SK-N-SH (cell line): ENCODE measurements at regions of chr10 and their contacts with region 1.

Region 1: DNA sequence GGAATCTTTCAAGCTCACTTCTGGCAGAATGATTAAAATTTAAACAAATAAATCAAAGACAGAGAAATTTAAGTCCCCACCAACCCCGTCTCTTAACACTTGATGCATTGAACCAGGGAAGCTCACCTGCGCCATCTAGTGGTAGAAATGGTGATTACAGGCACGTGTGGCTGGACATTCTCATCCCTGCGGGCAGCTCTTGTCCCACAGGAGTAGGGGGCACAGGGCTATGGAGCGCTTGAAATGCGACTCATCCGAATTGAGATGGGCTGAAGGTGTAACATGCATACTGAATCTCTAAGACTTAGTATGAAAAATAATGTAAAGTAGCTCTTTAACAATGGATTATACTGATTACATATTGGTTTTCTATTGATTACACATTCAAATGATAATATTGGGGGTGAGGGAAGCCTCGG is 24.8 kb upstream of the SLIT1 start:
- DNase-seq: peak; percentile 86
- H3K4me3 ChIP-seq: no peak overlapping the region; a peak in 1 of 4 replicates
- H3K27ac ChIP-seq: no peak overlapping the region
- H3K4me1 ChIP-seq: no peaks in the 10 kb centered on the region
- H3K27me3 ChIP-seq: no peaks in the 10 kb centered on the region
- CTCF ChIP-seq: peak; percentile 97
- EP300 ChIP-seq: no peak
- RAD21 ChIP-seq: peak; percentile 94

Region 2: DNA sequence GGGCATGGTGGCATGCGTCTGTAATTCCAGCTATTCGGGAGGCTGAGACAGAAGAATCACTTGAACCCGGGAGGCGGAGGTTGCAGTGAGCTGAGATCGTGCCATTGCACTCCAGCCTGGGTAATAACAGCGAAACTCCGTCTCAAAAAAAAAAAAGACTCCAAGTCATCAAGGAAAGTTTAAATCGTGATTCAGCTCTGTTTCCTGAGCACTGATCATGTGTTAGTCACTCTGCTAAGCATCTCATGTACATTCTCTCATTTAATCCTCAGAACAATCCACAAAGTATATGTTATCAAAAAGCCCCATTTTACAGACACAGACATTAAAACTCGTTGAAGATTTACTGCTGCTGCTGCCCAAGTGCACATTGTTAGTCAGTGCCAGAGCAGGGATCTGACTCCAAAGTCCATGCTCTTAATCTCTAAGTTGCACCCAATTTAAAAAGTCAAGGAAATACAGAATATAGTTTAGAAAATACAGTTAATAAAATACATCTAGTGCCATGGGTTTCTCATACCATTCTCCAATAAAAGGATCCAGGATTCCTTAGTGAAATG is 496.4 kb before region 1 on chr10:
- CTCF ChIA-PET with region 1: no interaction called
- POLR2A ChIA-PET with region 1: no interaction called
- DNase-seq: no peak
- H3K4me3 ChIP-seq: no peak overlapping the region
- H3K27ac ChIP-seq: no peak overlapping the region
- H3K4me1 ChIP-seq: no peaks in the 10 kb centered on the region
- H3K27me3 ChIP-seq: no peaks in the 10 kb centered on the region
- CTCF ChIP-seq: no peak
- EP300 ChIP-seq: no peak
- RAD21 ChIP-seq: no peak

Region 3: DNA sequence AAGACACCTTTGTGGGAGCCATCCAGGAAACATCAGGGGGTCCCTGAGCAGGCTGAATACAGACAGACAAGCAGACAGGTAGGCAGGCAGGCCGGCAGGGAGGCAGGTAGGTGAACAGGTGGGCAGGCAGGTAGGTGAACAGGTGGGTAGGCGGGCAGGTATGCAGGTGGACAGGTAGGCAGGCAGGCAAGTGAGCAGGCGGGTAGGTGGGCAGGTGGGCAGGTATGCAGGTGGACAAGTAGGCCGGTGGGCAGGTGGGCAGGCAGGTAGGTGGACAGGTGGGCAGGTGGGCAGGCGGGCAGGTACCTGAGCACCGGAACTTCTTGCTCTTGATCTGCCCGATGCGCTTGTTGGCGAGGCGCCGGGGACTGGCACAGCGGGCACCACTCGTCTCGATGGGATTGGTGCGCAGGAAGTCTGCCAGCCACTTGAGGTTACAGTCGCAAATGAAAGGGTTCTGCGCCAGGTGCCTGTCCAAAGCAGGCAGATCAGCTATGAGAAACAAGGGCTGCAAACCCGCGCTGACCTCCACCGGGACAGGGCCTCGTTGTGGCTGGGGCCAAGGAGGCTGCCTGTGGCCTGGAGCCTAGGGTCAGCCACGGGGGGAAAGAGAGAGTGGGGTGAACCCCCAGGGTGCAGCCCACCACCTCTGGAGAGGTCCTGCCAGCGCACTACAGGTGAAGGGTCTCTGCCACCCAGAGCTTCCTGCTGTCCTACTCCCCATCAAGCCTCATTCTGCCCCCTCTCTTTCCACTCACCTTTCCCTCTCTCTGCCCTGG is 161.7 kb before region 1 on chr10:
- CTCF ChIA-PET with region 1: interaction called, 17 read pairs
- POLR2A ChIA-PET with region 1: no interaction called
- DNase-seq: no peak
- H3K4me3 ChIP-seq: no peak overlapping the region
- H3K27ac ChIP-seq: no peak overlapping the region
- H3K4me1 ChIP-seq: peaks cover 0 to 13% of the 10 kb centered on the region in 2 experiments; a peak in 2 of 4 replicates
- H3K27me3 ChIP-seq: peaks cover 9% of the 10 kb centered on the region; the same call in 1 of the 2 replicates
- CTCF ChIP-seq: no peak
- EP300 ChIP-seq: no peak
- RAD21 ChIP-seq: no peak

Region 4: GRCh38 chr10:97107551-97107950 is 103.0 kb before region 1 on chr10:
- CTCF ChIA-PET with region 1: interaction called, 12 read pairs
- POLR2A ChIA-PET with region 1: no interaction called
- DNase-seq: no peak
- H3K4me3 ChIP-seq: no peak overlapping the region
- H3K27ac ChIP-seq: no peak overlapping the region
- H3K4me1 ChIP-seq: peaks cover 0 to 7% of the 10 kb centered on the region in 2 experiments; a peak in 1 of 4 replicates
- H3K27me3 ChIP-seq: peaks cover 19% of the 10 kb centered on the region
- CTCF ChIP-seq: no peak
- EP300 ChIP-seq: no peak
- RAD21 ChIP-seq: no peak

Region 5: DNA sequence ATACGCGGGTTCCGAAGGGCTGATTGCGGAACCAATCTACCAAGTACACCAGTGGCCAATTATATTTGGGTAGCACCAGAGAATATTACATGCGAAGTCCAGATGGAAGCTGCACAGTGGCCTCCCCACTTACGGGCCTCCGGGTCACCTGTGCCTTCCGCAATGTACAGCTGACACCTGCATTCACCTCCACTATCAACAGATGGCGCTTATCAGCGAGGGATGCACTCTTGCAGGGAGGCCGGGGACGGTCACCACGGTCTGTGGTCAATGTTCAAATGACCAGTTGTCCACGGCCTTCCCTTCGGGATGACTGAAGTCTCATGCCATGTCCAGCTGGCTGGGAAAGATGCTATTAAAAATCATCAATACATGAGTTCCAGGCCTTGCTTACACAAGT is 72.4 kb before region 1 on chr10:
- CTCF ChIA-PET with region 1: interaction called, 19 read pairs
- POLR2A ChIA-PET with region 1: no interaction called
- DNase-seq: no peak
- H3K4me3 ChIP-seq: no peak overlapping the region
- H3K27ac ChIP-seq: no peak overlapping the region
- H3K4me1 ChIP-seq: peaks cover 0 to 29% of the 10 kb centered on the region in 2 experiments; a peak in 2 of 4 replicates
- H3K27me3 ChIP-seq: peaks cover 23% of the 10 kb centered on the region
- CTCF ChIP-seq: no peak
- EP300 ChIP-seq: no peak
- RAD21 ChIP-seq: peak; percentile 37

Region 6: DNA sequence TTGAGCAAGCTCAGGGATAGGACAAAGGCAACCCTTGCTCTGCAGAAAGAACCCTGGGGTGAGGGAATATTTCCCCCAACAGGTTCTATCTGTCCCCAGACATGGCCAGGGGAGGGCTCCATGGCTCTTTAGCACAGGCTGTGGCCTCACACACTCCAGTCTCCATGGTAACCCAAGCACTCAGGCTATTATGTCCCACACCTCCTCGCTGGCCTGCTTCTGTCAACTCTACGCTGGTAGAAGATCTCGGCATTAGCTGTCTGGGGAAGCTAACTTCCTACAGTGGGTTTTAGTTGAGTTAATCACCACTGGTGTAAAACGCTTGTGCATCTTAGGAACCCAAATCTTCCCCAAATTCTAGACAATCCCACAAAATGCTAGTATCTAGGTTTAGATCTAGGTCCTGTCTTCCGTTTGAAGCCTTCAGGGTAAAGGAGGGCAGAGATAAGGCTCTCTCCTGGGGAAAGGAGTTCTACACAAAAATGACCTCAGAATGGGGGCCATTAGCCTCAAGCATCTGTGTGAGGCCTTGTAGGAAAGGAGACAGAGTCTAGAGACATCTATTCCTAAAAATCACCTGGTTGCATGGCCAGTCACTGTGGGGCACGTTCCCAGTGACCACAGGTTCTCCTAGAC is 11.9 kb after region 1 on chr10:
- CTCF ChIA-PET with region 1: interaction called, 53 read pairs
- POLR2A ChIA-PET with region 1: interaction called, 3 read pairs
- DNase-seq: peak; percentile 46
- H3K4me3 ChIP-seq: no peak overlapping the region
- H3K27ac ChIP-seq: no peak overlapping the region
- H3K4me1 ChIP-seq: peaks cover 6 to 12% of the 10 kb centered on the region in 2 experiments; a peak in 3 of 4 replicates
- H3K27me3 ChIP-seq: no peaks in the 10 kb centered on the region
- CTCF ChIP-seq: no peak
- EP300 ChIP-seq: no peak
- RAD21 ChIP-seq: 0 out of 2 replicates have a peak, but pooled peaks have one; percentile 11

Region 7: GRCh38 chr10:97234400-97234799 is 23.8 kb after region 1 on chr10:
- CTCF ChIA-PET with region 1: interaction called, 52 read pairs
- POLR2A ChIA-PET with region 1: no interaction called
- DNase-seq: peak; percentile 49
- H3K4me3 ChIP-seq: no peak overlapping the region
- H3K27ac ChIP-seq: no peak overlapping the region
- H3K4me1 ChIP-seq: no peaks in the 10 kb centered on the region
- H3K27me3 ChIP-seq: no peaks in the 10 kb centered on the region
- CTCF ChIP-seq: peak; percentile 82
- EP300 ChIP-seq: no peak
- RAD21 ChIP-seq: peak; percentile 84